AG04449 (cell line): ENCODE measurements at regions of chr11 and their contacts with region 1.

Region 1: GRCh38 chr11:34174412-34175041 is 69.1 kb downstream of the NAT10 start:
- DNase-seq: no peak
- H3K4me3 ChIP-seq: peak overlapping the region; percentile 45
- CTCF ChIP-seq: peak; percentile 98

Region 2: DNA sequence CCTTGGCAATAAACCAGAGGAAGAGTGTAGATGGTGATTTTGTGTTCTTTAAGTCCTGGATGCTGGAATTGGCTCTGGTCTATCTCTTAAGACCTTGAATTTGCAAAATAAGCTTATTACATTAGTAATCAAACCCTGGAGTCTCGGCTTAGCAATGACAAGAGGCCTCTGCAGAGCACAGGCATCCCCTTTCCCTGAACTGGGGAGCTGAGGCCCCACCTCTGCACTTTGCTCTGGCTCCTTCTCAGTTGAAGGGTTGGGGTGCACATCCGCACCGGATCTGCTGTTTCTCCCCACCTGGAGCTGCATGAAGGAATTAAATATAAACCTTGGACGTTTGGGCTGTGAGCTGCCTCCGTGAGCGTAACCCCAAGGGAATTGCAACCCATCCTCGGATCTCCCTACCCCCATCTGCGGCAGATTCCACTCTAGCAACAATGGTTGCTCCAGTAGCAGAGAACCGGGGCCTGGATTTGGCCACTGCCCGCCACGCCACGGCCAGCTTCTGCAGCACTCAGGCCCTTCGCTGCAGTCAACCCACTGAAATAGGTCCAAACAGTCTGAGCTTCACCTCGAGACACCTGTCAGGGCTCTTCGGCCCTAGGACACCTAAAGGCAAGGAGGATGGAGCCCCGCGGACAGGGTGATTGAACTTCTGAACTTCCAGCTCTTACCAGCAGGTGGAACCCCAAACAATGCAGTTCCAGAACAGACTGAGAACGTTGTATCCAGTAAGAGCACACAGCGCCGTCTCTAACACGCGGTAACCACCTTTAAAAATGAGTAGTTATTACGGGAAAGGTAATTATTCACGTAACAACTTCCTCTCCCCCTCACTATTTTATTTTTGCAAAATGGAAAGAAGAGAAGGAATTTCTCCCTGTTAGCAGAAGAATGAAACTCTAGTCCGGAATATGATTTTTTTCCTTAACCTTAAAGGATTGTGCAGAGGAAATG is 177.8 kb before region 1 on chr11:
- CTCF ChIA-PET with region 1: interaction called, 12 read pairs
- POLR2A ChIA-PET with region 1: no interaction called
- DNase-seq: no peak
- H3K4me3 ChIP-seq: no peak overlapping the region
- CTCF ChIP-seq: peak; percentile 76

Region 3: DNA sequence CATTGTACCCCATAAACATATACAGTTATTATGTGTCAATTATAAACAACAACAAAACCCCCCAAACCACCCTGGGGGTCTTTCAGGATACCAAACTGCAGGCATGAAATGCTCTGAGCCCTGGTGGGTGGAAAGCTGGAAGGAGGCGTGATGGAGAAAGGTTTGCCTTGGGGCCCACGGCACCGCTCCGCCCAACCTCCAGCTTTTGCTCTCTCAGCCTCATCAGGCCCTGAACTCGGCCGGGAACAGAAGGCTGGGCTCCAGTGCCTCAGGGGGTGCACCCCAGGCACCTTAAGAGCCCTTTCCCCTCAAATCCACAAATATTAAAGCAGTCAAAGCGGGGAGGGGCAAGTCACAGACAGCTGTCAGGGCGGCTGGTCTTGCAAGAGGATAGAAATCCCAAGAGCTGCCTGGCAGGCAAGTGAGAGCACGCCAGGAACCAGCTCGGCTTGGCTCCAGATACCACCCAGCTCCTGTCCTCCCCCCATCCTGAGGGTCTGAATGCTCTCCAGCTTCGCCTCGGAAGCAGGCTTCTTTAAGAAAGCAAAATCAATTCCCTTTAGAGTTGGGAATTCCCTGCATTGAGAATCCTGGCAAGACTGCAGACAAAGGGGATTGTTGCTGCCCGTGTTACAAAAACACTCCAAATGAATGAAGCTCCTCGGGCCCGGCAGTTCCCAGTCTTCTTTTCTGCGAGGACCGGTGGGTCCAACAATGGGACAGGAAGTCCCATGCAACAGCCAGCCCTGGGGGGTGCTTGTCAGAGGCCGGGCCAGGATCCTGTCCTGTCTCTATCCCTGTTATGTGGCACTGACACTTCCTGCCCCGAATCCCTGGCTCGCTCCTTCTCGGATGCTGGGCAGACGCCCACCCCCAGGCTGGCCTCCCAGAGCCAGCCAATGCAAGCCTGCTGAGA is 11.7 kb after region 1 on chr11:
- CTCF ChIA-PET with region 1: interaction called, 63 read pairs
- POLR2A ChIA-PET with region 1: no interaction called
- DNase-seq: no peak
- H3K4me3 ChIP-seq: no peak overlapping the region
- CTCF ChIP-seq: no peak

Region 4: DNA sequence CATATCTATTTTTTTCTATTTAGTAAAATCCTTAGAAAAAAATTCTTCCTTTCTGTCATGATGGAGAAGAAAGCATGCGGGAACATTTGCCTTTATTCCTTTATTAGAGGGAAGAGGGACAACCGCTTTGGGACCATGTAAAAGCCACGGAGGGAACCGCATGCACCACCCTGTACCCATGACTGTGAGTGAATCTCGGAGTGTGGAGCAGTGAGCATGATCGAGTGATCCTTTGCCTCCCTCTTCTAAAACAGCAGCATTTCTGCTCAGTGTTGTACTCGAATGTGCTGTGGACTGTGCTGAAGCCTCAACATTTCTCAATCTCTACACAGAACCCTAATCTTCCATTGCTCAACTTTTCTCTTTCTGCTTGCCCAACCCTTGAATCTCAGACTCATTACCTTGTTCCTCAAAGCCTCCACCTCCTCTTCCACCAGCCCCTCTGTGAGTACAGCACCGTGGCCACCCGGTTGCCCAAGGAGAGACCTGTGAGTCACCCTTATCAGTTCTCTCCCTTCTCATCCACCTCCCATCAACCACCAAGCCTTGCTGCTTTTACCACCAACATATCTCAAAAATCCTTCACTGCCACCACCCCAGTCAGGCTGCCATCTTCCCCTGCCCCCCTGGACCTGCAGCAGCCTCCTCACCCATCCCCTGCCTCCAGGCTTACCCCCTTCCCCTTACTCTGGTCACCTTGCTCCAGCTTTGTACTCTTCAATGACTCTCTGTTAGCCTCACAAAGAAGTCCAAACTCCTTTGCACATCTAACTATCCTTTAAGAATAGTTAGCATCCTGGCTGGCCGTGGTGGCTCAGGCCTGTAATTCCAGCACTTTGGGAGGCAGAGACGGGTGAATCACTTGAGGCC is 34.0 kb after region 1 on chr11:
- CTCF ChIA-PET with region 1: interaction called, 19 read pairs
- POLR2A ChIA-PET with region 1: no interaction called
- DNase-seq: no peak
- H3K4me3 ChIP-seq: no peak overlapping the region
- CTCF ChIP-seq: no peak

Region 5: DNA sequence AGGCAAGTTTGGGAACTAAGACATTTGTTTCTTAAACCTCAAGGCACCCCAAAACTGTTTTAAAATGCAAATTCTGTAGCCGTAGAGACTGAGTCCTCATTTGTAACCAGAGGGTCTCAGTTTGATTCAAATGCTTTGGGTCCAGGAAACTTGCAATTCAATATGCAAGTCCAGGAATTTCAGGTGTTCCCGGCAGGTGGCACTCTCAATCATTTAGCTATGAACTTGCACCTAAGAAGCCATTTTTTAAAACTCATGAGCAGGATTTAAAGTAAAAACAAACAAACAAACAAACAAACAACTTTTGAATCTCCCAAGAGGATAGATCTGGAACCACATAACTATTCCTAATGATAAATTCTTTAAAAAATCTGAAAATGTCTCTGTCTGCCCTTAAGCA is 192.0 kb after region 1 on chr11:
- CTCF ChIA-PET with region 1: interaction called, 193 read pairs
- POLR2A ChIA-PET with region 1: no interaction called
- DNase-seq: no peak
- H3K4me3 ChIP-seq: no peak overlapping the region
- CTCF ChIP-seq: no peak